ENCODE measurements at regions of chr4 and their contacts with region 1.

Region 1: GRCh38 chr4:77600521-77601451 is 4.8 kb upstream of the CXCL13 start:
- DNase-seq: peak in 1 of 2 experiments; percentile 37
- H3K4me3 ChIP-seq: no peak overlapping the region
- H3K27ac ChIP-seq: no peak overlapping the region
- H3K4me1 ChIP-seq: no peaks in the 10 kb centered on the region
- H3K27me3 ChIP-seq: peaks cover 3% of the 10 kb centered on the region; the same call in 1 of the 2 replicates
- CTCF ChIP-seq: peak; percentile 81

Region 2: GRCh38 chr4:77367638-77368037 is 233.1 kb before region 1 on chr4:
- CTCF ChIA-PET with region 1: no interaction called
- POLR2A ChIA-PET with region 1: no interaction called
- intact Hi-C with region 1: loop called (anchors 5 kb)
- DNase-seq: no peak
- H3K4me3 ChIP-seq: no peak overlapping the region
- H3K27ac ChIP-seq: no peak overlapping the region
- H3K4me1 ChIP-seq: no peaks in the 10 kb centered on the region
- H3K27me3 ChIP-seq: peaks cover 20% of the 10 kb centered on the region
- CTCF ChIP-seq: no peak

Region 3: GRCh38 chr4:77385124-77385969 is 215.4 kb before region 1 on chr4:
- CTCF ChIA-PET with region 1: interaction called, 3 read pairs
- POLR2A ChIA-PET with region 1: no interaction called
- intact Hi-C with region 1: loop called (anchors 1 kb)
- DNase-seq: peak in 1 of 2 experiments; percentile 31
- H3K4me3 ChIP-seq: no peak overlapping the region
- H3K27ac ChIP-seq: no peak overlapping the region
- H3K4me1 ChIP-seq: no peaks in the 10 kb centered on the region
- H3K27me3 ChIP-seq: no peaks in the 10 kb centered on the region
- CTCF ChIP-seq: peak; percentile 76

Region 4: GRCh38 chr4:77433418-77433733 is 167.4 kb before region 1 on chr4:
- CTCF ChIA-PET with region 1: no interaction called
- POLR2A ChIA-PET with region 1: no interaction called
- intact Hi-C with region 1: loop called (anchors 10 kb)
- DNase-seq: peak; percentile 2 to 41
- H3K4me3 ChIP-seq: no peak overlapping the region
- H3K27ac ChIP-seq: no peak overlapping the region
- H3K4me1 ChIP-seq: no peaks in the 10 kb centered on the region
- H3K27me3 ChIP-seq: no peaks in the 10 kb centered on the region
- CTCF ChIP-seq: peak; percentile 60

Region 5: DNA sequence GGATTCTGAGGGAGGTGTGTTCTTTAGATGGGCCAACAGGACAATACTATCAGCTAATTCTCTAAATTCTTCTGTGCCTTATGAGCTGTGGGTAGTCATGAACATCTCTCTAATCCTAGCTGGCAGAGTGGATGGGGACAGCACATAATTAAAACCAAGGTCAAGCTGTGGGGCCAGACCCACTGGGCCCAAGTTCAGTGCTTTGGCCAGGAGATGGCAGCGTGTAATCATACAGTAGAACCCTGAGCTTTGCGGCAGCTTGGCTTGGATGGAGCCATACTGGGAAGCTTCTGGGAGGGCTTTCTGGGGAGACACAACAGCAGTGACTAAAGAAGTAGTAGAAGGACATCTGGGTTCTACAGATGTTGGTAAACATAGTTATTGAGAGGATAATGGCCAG is 135.5 kb before region 1 on chr4:
- CTCF ChIA-PET with region 1: interaction called, 5 read pairs
- POLR2A ChIA-PET with region 1: no interaction called
- intact Hi-C with region 1: loop called (anchors 2 kb)
- DNase-seq: no peak
- H3K4me3 ChIP-seq: no peak overlapping the region
- H3K27ac ChIP-seq: no peak overlapping the region
- H3K4me1 ChIP-seq: no peaks in the 10 kb centered on the region
- H3K27me3 ChIP-seq: no peaks in the 10 kb centered on the region
- CTCF ChIP-seq: peak; percentile 38; the same call in 1 of the 2 replicates